ENCODE measurements at regions of chr1 and their contacts with region 1.

Region 1: GRCh38 chr1:175154629-175155472 is 37.7 kb downstream of the KIAA0040 start:
- H3K4me3 Mint-ChIP-seq: no peak overlapping the region
- H3K27ac Mint-ChIP-seq: no peak overlapping the region
- H3K4me1 Mint-ChIP-seq: no peaks in the 10 kb centered on the region
- H3K27me3 Mint-ChIP-seq: peaks cover 23% of the 10 kb centered on the region

Region 2: DNA sequence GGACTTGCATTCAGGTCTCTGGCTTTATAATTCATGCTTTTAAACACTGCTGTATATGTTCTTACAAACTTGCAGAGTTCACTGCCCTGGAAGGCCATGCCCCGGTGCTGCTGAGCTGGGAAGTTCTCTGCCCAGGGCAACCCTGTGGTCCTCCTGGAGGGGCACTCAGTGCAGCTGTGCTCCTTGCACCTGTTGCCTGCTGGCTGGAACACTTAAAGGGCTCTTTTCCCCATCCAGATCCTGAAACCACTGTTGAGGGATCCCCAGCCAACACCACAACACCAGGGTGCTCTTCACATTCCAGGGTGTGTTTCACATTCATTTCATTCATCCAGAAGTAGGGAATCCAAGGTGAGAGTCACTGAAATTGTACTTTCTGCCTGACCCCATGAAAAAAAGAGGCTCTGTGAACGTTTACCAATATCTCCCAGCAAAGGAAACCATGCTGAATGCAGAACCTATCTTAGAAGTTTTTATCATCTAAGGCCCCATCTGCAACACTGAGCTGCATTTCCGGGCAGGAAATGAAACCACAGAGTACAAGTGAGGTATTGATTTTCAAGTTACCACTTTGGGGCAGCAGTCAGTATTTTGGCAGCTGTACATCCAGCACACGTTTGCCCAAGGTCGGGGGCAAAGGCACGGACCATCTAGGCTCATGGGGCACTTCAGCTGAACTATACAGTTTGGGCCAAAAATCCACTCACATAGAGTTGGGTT is 54.1 kb after region 1 on chr1:
- intact Hi-C with region 1: loop called (anchors 2 kb)
- H3K4me3 Mint-ChIP-seq: no peak overlapping the region
- H3K27ac Mint-ChIP-seq: peak overlapping the region; percentile 47
- H3K4me1 Mint-ChIP-seq: peaks cover 10% of the 10 kb centered on the region
- H3K27me3 Mint-ChIP-seq: no peaks in the 10 kb centered on the region

Region 3: GRCh38 chr1:175250027-175250426 is 95.2 kb after region 1 on chr1:
- intact Hi-C with region 1: no loop called
- H3K4me3 Mint-ChIP-seq: no peak overlapping the region
- H3K27ac Mint-ChIP-seq: no peak overlapping the region
- H3K4me1 Mint-ChIP-seq: no peaks in the 10 kb centered on the region
- H3K27me3 Mint-ChIP-seq: no peaks in the 10 kb centered on the region

Region 4: DNA sequence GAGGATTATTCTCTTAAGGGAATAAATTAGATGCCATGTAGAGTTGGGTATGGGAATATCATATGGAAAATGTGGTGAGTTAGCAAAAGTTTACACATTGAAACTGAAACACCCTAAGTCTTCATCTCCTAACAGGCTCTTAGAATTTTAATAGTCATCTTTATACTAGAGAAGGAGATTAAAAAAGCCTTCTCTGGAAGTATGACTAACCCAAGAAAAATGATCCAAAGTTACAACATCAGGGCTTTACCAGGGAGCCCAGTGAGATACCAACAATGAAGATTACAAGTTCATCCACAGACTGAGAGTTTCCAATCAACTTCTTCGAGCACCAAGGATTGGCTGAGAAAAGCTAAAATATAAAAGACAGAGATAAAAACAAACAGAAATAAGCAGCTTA is 107.8 kb after region 1 on chr1:
- intact Hi-C with region 1: no loop called
- H3K4me3 Mint-ChIP-seq: no peak overlapping the region
- H3K27ac Mint-ChIP-seq: no peak overlapping the region
- H3K4me1 Mint-ChIP-seq: no peaks in the 10 kb centered on the region
- H3K27me3 Mint-ChIP-seq: peaks cover 1% of the 10 kb centered on the region

Region 5: GRCh38 chr1:175319418-175320230 is 164.8 kb after region 1 on chr1:
- intact Hi-C with region 1: loop called (anchors 1 kb)
- H3K4me3 Mint-ChIP-seq: no peak overlapping the region
- H3K27ac Mint-ChIP-seq: no peak overlapping the region
- H3K4me1 Mint-ChIP-seq: peaks cover 6% of the 10 kb centered on the region
- H3K27me3 Mint-ChIP-seq: peaks cover 3% of the 10 kb centered on the region

Region 6: DNA sequence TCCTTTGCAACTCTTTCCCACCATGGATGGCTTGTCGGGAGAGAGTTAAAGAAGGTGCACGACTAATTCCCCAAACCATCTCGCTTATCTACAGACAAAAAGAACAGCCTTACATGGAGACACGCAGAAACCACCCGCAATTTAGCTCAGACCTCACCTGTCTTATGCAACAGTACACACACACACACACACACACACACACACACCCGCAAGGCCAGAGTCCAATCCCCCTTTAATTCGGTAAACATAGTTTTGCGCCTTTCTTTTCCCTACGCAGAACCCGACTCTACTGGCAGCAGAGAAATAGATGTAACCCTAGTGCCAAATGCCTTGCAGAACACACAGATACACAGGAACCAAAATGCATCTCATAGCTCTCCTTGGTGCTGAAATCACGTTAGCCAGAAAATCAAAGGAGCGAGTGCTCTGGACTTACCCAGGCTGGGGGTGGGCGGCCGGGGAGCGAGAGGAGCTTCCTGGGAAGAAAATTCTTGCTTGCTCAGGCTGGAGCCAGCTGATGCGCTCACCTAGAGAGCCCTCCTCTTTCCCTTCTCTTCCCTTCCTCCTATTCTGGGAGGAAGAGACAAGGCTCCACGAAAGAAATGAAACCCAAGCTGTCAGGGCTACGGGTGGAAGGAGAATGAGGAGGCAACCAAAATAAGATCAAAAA is 588.1 kb after region 1 on chr1:
- intact Hi-C with region 1: loop called (anchors 10 kb)
- H3K4me3 Mint-ChIP-seq: no peak overlapping the region
- H3K27ac Mint-ChIP-seq: no peak overlapping the region
- H3K4me1 Mint-ChIP-seq: peaks cover 6% of the 10 kb centered on the region
- H3K27me3 Mint-ChIP-seq: peaks cover 35% of the 10 kb centered on the region

Measured in dendritic cell treated with granulocyte-macrophage colony-stimulating factor and Interleukin-4, amounts not matched to agents 40 ng/mL and 50 ng/mL, for 4 days (primary cell).